HepG2 (cell line): ENCODE measurements at regions of chr3 and their contacts with region 1.

Region 1: DNA sequence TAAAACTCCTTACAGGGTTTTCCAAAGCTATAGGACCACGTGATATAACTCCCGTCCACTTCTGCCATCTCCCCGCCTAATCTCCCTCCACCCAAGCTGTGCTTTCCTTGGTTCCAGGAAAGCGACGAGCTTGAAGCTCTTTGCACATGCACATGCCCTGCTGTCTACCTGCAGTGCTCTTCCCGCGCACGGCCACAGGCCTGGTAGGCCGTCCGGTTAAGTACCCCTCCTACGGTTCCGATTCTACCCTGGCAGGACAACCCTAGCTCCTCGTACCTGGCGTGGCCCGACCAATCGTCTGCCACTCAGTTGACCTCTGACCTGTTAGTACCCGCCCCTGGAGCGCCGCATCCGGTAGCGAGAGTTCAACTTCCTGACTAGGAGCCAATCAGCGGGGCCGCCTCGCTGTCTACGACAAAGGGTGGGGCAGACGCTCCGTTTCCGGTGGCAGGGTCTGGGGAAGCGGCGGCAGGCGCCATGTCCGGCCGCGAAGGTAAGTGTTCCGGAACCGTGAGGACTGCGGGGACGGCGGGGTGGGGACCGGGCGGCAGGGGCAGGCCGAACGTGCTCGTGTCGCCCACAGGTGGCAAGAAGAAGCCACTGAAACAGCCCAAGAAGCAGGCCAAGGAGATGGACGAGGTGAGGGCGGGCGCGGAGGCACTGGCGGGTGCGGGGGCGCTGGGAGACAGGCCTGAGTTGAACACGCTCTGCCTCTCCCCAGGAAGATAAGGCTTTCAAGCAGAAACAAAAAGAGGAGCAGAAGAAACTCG is at the starts of genes CCDC51 and TMA7:
- DNase-seq: peak; percentile 96
- ATAC-seq: peak; percentile 94
- H3K4me3 ChIP-seq: peak within 1 kb of the TSS; percentile 90 to 95 (median 93)
- H3K27ac ChIP-seq: peak within 1 kb of the TSS; percentile 73
- H3K4me1 ChIP-seq: peaks cover 52% of the 10 kb centered on the region
- H3K27me3 ChIP-seq: no peaks in the 10 kb centered on the region; a peak in 1 of 5 replicates
- CTCF ChIP-seq: peak; percentile 19; the same call in 1 of the 2 replicates
- EP300 ChIP-seq: no peak
- POLR2A ChIP-seq: peak; percentile 79 to 86
- RAD21 ChIP-seq: peak; percentile 7; the same call in 1 of the 2 replicates
- total RNA-seq, gene CCDC51: 29.4 and 38.3 TPM in 2 replicates
- total RNA-seq, gene TMA7: 486 and 510 TPM in 2 replicates

Region 2: GRCh38 chr3:48232734-48233133 is 207.3 kb before region 1 on chr3:
- CTCF ChIA-PET with region 1: interaction called, 28 read pairs
- POLR2A ChIA-PET with region 1: no interaction called
- in situ Hi-C with region 1: loop called (anchors 5 kb)
- intact Hi-C with region 1: loop called (anchors 2 kb)
- DNase-seq: peak; percentile 76
- ATAC-seq: peak; percentile 98
- H3K4me3 ChIP-seq: peak overlapping the region in 2 of 3 experiments; percentile 6 to 45; a peak in 1 of 6 replicates
- H3K27ac ChIP-seq: no peak overlapping the region
- H3K4me1 ChIP-seq: peaks cover 42% of the 10 kb centered on the region
- H3K27me3 ChIP-seq: no peaks in the 10 kb centered on the region
- CTCF ChIP-seq: peak; percentile 95
- EP300 ChIP-seq: no peak
- POLR2A ChIP-seq: no peak
- RAD21 ChIP-seq: peak; percentile 82

Region 3: DNA sequence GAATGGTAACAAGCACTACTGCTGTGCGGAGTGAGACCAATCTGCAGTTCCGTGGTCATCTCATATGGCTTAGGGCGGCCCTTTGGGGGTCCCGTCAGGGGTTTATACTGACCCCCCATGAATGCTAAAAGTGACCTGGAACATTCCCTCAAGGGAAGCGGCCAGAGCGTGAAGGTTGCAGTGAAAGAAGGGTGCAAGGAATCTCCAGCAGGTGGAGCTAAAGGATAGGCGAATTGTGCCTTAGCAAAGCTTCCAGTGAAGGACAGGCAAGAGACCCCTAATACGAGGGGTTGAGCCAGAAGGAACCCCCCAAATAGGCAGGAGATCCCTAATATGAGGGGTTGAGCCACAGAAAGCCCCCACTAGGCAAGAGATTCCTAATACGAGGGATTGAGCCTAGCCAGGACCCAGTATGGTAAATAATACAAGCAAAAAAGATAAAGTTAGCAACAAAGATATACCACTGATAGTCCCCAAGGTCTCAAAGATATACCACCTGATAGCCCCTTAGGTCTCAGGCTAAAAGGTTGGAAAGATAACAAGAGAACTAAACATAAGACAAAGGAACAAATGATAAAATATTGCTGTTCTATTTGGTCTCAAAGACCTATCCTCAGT is 166.3 kb before region 1 on chr3:
- CTCF ChIA-PET with region 1: interaction called, 76 read pairs
- POLR2A ChIA-PET with region 1: interaction called, 14 read pairs
- in situ Hi-C with region 1: loop called (anchors 5 kb)
- intact Hi-C with region 1: loop called (anchors 1 kb)
- DNase-seq: peak; percentile 66
- ATAC-seq: peak; percentile 85
- H3K4me3 ChIP-seq: no peak overlapping the region
- H3K27ac ChIP-seq: no peak overlapping the region
- H3K4me1 ChIP-seq: no peaks in the 10 kb centered on the region
- H3K27me3 ChIP-seq: no peaks in the 10 kb centered on the region; a peak in 1 of 5 replicates
- CTCF ChIP-seq: peak; percentile 90
- EP300 ChIP-seq: no peak
- POLR2A ChIP-seq: no peak
- RAD21 ChIP-seq: peak; percentile 81

Region 4: GRCh38 chr3:48415554-48415953 is 24.5 kb before region 1 on chr3:
- CTCF ChIA-PET with region 1: interaction called, 25 read pairs
- POLR2A ChIA-PET with region 1: interaction called, 4 read pairs
- in situ Hi-C with region 1: no loop called
- intact Hi-C with region 1: no loop called
- DNase-seq: no peak
- ATAC-seq: peak; percentile 30
- H3K4me3 ChIP-seq: no peak overlapping the region
- H3K27ac ChIP-seq: no peak overlapping the region
- H3K4me1 ChIP-seq: no peaks in the 10 kb centered on the region
- H3K27me3 ChIP-seq: no peaks in the 10 kb centered on the region
- CTCF ChIP-seq: peak; percentile 56
- EP300 ChIP-seq: no peak
- POLR2A ChIP-seq: no peak
- RAD21 ChIP-seq: peak; percentile 60

Region 5: DNA sequence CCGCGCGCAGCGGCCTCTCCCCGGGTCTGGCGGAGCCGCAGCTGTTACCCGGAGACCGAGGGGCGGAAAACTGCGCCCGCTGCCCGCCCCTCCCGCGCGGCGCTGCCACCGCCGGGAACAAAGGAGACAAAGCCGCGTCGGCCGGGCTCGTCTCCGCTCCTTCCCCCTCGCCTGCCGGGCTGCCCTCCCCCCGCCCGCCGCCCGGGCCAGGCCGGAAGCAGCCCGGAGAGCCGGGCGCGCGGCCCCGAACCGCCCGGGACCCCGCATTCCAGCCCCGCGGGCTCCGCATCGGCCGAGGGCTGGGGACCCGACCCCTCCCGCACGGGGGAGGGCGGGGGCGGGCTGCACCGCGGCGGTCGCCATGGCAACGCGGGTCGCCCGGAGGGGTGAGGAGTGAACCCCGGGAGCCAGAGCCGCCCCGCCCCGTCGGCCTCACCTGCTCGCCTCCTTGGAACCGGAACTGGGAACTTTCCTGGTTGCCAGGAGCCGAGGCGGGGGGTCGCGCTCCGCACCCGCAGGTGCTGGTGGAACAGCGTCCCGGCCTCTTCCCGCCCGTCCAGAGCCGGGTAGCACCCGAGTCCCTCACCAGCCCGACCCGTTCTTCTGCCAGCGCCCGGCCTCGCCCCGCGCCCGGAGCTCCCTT is 10.6 kb before region 1 on chr3:
- CTCF ChIA-PET with region 1: interaction called, 14 read pairs
- POLR2A ChIA-PET with region 1: interaction called, 120 read pairs
- in situ Hi-C with region 1: no loop called
- intact Hi-C with region 1: loop called (anchors 1 kb)
- DNase-seq: peak; percentile 50
- ATAC-seq: peak; percentile 4
- H3K4me3 ChIP-seq: peak overlapping the region; percentile 79 to 93 (median 86)
- H3K27ac ChIP-seq: peak overlapping the region; percentile 99
- H3K4me1 ChIP-seq: peaks cover 84% of the 10 kb centered on the region
- H3K27me3 ChIP-seq: no peaks in the 10 kb centered on the region
- CTCF ChIP-seq: no peak
- EP300 ChIP-seq: no peak
- POLR2A ChIP-seq: no peak; a peak in 1 of 4 replicates
- RAD21 ChIP-seq: peak; percentile 40